IMR-90 (cell line): ENCODE measurements at regions of chr2 and their contacts with region 1.

Region 1: DNA sequence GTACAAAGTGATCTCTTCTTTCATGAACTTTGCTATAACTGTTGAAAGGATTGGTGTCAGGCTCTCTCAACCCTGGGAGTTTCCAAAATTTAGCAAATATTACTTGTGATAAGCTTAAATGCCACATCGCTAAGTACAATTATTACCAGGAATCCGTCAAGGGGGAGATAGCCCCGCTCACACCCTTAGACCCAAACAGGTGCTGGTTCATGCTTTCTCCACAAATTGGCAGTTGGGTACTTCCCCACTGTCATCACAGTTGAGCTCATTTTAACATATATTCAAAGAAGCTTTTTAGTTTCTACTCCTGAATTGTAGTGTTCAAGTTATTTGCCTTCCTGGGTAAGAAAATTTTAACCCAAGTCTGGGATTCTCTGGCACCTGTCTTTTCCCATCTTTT is 29.8 kb upstream of the EPB41L5 start:
- DNase-seq: no peak
- ATAC-seq: no peak
- H3K4me3 ChIP-seq: no peak overlapping the region
- H3K27ac ChIP-seq: no peak overlapping the region
- H3K4me1 ChIP-seq: no peaks in the 10 kb centered on the region
- H3K27me3 ChIP-seq: no peaks in the 10 kb centered on the region
- CTCF ChIP-seq: no peak
- POLR2A ChIP-seq: no peak
- RAD21 ChIP-seq: no peak

Region 2: GRCh38 chr2:119921825-119922224 is 61.3 kb before region 1 on chr2:
- CTCF ChIA-PET with region 1: no interaction called
- POLR2A ChIA-PET with region 1: no interaction called
- dilution Hi-C with region 1: no loop called
- in situ Hi-C with region 1: no loop called
- intact Hi-C with region 1: loop called (anchors 5 kb)
- DNase-seq: no peak
- ATAC-seq: no peak
- H3K4me3 ChIP-seq: no peak overlapping the region
- H3K27ac ChIP-seq: no peak overlapping the region
- H3K4me1 ChIP-seq: no peaks in the 10 kb centered on the region
- H3K27me3 ChIP-seq: no peaks in the 10 kb centered on the region
- CTCF ChIP-seq: no peak
- POLR2A ChIP-seq: no peak
- RAD21 ChIP-seq: no peak